ENCODE measurements at regions of chr19 and their contacts with region 1.

Region 1: GRCh38 chr19:53849237-53849676 is 18.4 kb upstream of the MYADM start:
- ATAC-seq: no peak
- H3K4me3 ChIP-seq: no peak overlapping the region
- H3K27ac ChIP-seq: no peak overlapping the region
- H3K4me1 ChIP-seq: peaks cover 17 to 18% of the 10 kb centered on the region in 2 donors

Region 2: DNA sequence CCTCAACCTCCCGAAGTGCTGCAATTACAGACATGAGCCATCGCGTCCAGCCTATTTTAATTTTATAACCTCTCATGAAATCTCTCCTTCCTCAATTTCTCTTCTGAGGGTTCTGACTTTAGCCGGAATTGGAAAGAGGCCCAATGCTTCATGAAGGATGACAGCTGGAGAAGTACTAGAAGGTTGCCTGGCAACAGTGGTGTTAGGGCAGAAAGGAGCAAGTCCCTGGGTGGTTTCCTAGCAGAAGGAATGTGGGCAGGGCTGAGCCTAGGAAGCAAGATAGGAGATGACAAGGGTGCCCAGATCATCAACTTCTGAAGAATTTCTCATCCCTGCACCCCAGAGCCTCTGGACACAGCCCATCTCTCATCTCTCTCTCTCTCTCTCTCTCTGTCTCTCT is 168.0 kb after region 1 on chr19:
- in situ Hi-C with region 1: loop called in 4 of 9 experiments (anchors 10 to 25 kb)
- ATAC-seq: peak in 3 of 8 experiments; percentile 7 to 45 (median 24)
- H3K4me3 ChIP-seq: no peak overlapping the region
- H3K27ac ChIP-seq: no peak overlapping the region
- H3K4me1 ChIP-seq: peaks cover 0 to 6% of the 10 kb centered on the region in 2 donors

Region 3: GRCh38 chr19:54029930-54030490 is 180.8 kb after region 1 on chr19:
- in situ Hi-C with region 1: loop called in 1 of 9 experiments (anchors 10 kb)
- ATAC-seq: peak in 3 of 8 experiments; percentile 42 to 70 (median 49)
- H3K4me3 ChIP-seq: no peak overlapping the region
- H3K27ac ChIP-seq: no peak overlapping the region
- H3K4me1 ChIP-seq: no peaks in the 10 kb centered on the region

Measured in motor neuron (in vitro differentiated cells).